GM10248 (cell line): ENCODE measurements at regions of chr17 and their contacts with region 1.

Region 1: GRCh38 chr17:48878918-48879898 is 13.4 kb upstream of the ATP5MC1 start:
- DNase-seq: peak; percentile 83
- CTCF ChIP-seq: peak; percentile 90

Region 2: DNA sequence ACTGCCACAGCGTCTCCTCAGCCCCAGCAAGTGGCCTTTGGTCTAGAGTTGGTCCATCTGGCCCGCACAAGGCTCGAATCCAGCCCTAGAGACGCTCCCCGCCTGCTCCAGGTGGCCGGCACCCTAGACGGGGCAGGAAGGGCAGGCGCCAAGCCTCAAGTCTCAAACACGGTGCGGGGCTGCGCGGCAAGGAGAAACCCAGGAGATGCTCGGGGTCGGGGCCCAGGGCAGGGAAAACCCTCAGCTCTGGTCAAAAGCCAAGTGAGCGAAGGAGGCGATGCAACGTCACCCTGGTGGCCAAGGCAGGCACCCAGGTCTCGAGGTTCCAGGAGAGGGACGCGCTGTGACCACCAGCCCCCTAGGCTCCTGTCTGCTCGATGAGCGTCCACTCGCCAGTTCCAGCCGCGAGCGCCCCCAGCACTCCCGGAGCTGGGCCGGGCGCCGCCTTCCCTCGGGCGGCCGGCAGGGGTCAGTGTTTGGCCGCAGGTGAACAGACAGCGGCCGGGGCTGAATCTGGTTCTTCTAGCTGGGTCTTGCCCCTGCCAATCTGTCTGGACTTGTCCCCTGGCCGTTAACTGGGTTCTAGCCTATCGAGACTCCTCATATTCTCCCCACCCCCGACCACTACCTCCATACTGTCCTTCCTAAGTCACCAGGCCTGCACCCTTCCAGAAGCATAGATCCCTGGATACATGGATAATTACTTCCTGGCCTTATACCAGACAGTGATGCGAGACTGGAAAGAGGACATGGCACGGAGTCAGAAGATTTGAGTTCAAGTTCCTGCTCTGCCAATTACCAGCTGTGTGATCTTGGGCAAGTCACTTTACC is 200.9 kb before region 1 on chr17:
- CTCF ChIA-PET with region 1: interaction called, 78 read pairs
- POLR2A ChIA-PET with region 1: no interaction called
- DNase-seq: peak; percentile 89
- CTCF ChIP-seq: peak; percentile 92

Region 3: DNA sequence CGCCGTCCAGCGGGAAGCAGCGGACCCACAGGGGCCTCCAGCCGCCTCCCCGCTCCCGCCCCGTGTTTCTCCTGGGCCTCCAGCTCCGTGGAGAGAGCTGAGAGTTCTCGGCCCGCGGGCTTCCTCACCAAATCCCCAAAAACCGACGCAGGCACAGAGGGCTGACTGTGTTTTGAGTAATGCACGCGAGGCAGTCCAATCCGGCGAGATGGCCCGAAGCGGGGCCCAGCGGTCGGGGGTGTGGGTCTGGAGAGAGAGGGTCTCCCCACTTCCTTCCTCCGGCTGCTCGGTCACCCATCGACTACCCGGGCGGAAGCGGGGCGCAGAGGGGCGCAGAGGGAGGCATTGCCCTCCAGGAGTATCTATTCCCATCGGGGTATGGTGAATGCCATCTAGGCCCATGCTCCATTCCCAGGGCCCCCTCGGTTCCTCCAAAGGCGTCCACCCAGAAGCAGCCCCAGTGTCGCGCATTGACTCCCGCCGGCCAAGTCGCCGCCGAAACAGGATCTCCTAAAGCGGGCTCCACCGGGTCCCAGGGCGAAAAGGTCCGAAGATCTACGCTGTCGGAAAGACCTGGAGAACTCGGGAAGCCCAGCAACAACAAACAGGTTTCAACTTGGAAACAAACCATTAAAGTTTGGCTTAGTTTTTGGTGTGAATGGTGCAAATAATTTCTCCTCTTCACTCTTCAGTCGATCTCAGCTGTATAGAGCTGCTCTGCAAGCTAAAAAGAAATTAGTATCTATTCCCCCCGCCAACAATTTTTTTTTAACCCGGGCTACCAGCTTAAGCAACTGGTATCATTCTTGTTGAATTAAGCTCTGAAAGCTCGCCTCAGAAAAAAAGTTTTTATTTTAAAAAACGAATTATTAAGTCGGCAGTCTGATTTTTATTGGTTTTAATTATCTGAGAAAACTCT is 131.5 kb before region 1 on chr17:
- CTCF ChIA-PET with region 1: interaction called, 13 read pairs
- POLR2A ChIA-PET with region 1: no interaction called
- DNase-seq: no peak
- CTCF ChIP-seq: no peak

Region 4: GRCh38 chr17:48830840-48831548 is 48.2 kb before region 1 on chr17 and contains the start of gene CALCOCO2:
- CTCF ChIA-PET with region 1: interaction called, 770 read pairs
- POLR2A ChIA-PET with region 1: interaction called, 5 read pairs
- DNase-seq: peak; percentile 96
- CTCF ChIP-seq: peak; percentile 8

Region 5: DNA sequence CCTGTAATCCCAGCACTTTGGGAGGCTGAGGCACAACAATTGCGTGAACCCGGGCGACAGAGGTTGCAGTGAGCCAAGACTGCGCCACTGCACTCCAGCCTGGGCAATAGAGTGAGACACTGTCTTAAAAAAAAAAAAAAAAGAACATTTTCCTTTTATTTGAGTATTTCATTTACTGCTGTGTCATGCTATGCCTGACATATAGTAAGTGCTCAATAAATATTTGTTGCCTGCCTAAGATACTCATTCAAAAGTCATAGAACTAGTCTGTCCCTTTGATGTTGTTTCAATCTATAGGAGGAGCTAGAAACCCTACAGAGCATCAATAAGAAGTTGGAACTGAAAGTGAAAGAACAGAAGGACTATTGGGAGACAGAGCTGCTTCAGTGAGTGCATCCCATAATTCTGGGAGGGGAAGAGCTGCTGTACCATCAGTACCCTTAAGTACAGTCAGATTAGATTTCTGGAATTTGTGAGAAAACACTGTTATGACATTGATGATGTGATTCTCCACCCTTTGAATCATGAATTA is 28.4 kb before region 1 on chr17:
- CTCF ChIA-PET with region 1: interaction called, 109 read pairs
- POLR2A ChIA-PET with region 1: no interaction called
- DNase-seq: no peak
- CTCF ChIP-seq: no peak

Region 6: DNA sequence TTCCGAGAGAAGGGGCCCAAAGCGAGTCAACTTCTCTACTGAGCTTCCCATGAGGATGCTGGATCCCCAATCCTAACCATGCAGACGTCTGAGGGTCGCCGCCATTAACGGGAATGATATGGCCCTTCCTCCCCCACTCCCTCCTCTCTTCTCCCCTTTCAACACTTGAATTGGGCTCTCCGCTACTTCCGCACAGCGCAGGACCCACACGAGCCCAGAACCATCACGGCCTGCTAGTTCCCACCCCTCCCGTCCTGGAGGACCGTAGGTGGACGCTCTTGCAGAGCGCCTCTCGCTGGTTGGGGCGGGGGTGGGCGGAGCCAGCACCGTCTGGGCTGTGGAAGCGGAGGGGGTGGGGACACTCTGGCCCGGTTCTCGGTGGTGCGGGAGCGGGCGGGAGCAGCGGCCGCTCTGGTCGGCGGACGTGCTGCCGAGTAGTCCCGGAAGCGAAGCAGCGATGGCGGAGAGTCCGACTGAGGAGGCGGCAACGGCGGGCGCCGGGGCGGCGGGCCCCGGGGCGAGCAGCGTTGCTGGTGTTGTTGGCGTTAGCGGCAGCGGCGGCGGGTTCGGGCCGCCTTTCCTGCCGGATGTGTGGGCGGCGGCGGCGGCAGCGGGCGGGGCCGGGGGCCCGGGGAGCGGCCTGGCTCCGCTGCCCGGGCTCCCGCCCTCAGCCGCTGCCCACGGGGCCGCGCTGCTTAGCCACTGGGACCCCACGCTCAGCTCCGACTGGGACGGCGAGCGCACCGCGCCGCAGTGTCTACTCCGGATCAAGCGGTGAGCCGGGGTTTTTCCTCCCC is 29.0 kb after region 1 on chr17 and contains the start of gene UBE2Z:
- CTCF ChIA-PET with region 1: interaction called, 13 read pairs
- POLR2A ChIA-PET with region 1: no interaction called
- DNase-seq: peak; percentile 96
- CTCF ChIP-seq: no peak

Region 7: DNA sequence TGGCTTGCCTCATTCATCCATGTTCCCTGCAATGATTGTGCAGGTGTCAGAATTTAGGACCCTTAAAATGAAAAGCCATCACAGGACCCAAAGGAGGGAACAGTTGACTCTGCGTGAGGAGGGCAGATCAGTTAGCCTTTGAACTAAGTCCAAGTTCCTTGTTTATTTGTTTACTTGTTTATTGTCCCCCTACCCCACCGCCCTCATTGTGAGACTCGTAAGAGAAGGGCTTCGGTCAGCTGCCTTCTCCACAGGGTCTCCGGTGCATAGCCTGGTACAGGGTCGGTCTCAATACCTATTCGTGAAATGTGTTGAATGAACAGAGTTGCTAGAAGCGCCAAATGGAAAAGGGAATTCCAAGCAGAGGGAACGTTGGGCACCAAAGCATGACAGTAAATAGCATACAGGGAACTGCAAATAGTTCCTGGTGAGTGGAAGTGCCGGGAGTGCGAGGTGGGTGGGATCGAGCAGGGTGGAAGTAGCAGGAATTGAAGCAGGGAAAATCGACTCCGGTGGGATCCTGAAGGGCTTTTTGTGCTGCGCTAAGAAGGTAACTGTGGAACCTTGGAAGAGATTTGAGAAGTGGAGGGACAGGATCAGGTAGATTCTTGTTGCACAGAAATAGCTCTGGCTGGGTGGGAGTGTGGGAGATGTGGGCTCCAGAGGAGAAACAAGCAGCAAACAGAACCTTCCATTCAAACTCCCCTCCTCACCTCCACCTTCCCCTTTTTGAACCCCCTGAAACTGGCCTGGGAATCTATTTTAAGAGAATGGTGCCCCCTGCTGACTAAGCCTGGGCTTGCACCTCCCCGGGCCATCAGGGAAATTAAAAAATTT is 815.9 kb after region 1 on chr17:
- CTCF ChIA-PET with region 1: no interaction called
- POLR2A ChIA-PET with region 1: no interaction called
- DNase-seq: peak; percentile 68
- CTCF ChIP-seq: peak; percentile 78